Body of pancreas (tissue), 4 donors: ENCODE measurements at regions of chr14 and their contacts with region 1.

Region 1: DNA sequence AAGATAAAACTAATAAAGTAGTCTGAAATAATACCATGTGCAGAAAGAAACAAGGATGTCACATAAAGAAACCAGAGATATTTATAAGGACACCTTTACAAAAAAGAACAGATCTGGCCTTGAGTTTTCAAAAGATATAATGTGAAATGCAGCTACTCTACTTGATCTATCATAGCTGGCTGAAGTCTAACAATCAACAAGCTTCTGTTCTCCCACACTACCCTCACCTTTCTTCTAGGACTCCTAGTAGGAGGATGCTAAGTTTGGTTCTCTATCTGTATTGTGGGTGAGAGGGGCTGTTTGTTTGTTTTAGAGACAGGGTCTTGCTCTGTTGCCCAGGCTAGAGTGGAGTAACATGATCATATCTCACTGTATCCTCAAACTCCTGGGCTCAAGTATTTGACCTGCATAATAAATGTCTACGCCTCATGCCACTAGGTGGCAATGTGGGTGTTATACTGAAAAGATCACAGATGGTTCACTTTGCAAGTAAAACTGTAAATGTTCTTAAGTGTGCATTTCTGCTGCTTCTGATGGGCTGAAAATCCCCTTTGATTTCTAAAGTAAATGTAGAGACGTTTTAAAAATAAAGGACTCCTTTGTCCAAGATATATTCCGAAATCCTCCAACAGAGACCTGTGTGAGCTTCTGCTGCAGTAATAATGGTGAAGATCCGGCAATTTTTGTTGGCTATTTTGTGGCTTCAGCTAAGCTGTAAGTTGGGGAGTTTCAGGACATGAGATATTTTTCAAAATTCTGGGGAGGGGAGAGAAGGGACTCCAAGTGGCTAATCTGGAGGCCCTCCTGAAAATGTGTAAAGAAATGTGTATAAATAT is 269.3 kb downstream of the DAD1 start:
- DNase-seq: peak; percentile 55 to 72 (median 68)
- ATAC-seq: peak; percentile 75
- H3K4me3 ChIP-seq: no peak overlapping the region
- H3K27ac ChIP-seq: no peak overlapping the region
- H3K4me1 ChIP-seq: no peaks in the 10 kb centered on the region
- H3K27me3 ChIP-seq: no peaks in the 10 kb centered on the region
- CTCF ChIP-seq: peak; percentile 41 to 79 (median 60)
- POLR2A ChIP-seq: no peak

Region 2: GRCh38 chr14:22370084-22370847 is 50.5 kb after region 1 on chr14:
- intact Hi-C with region 1: loop called (anchors 5 kb)
- DNase-seq: peak in 3 of 4 donors; percentile 19 to 66 (median 52)
- ATAC-seq: peak; percentile 87
- H3K4me3 ChIP-seq: no peak overlapping the region
- H3K27ac ChIP-seq: peak overlapping the region in 2 of 4 donors; percentile 4 to 44
- H3K4me1 ChIP-seq: no peaks in the 10 kb centered on the region
- H3K27me3 ChIP-seq: no peaks in the 10 kb centered on the region
- CTCF ChIP-seq: no peak
- POLR2A ChIP-seq: no peak

Region 3: GRCh38 chr14:22386924-22387775 is 67.4 kb after region 1 on chr14:
- intact Hi-C with region 1: loop called (anchors 5 kb)
- DNase-seq: peak; percentile 69 to 76 (median 74)
- ATAC-seq: peak; percentile 45
- H3K4me3 ChIP-seq: no peak overlapping the region
- H3K27ac ChIP-seq: no peak overlapping the region
- H3K4me1 ChIP-seq: peaks cover 2% of the 10 kb centered on the region
- H3K27me3 ChIP-seq: no peaks in the 10 kb centered on the region
- CTCF ChIP-seq: peak; percentile 64 to 85 (median 80)
- POLR2A ChIP-seq: no peak

Region 4: DNA sequence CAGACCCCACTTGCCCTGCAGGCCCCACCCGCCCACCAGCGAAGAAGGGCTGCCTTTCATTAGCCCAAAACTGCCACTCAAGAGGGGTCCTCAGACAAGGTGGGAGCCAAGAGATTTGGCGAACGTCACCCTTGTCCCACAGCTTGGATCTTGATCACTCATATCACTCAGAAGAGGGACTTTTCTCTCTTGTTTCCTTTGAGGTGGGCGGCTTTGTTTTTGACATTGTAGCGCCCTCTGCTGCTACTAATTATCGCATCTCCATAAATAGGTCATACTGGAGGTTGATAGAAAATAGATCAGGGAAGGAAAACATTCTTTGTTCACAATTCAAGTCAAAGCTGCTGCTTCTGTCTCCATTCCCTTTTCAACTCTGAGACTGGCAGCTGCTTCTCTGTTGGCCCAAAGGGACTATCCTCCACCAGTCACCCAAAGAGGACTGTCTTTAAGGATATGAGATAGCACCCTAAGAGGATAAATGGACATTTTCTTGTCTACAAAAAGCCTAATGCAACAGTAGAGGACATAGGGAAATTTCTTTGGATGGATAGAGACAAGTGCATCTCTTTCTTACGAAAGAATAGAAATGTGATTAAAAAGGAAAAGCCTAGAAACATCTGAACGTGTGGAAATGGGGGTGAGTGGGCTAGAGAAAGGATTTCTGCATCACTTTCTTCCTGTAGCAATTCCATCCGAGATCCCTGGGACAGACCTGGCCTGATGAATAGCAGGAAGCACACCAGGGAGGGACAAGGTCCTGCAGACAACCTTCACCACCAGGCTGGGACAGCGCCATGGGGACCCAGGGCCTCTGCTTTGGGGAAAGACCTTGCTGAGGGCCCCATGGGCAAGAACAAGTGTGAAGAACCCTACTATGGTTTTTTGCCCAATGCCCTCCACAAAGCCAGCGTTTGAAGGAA is 153.5 kb after region 1 on chr14:
- intact Hi-C with region 1: loop called (anchors 10 kb)
- DNase-seq: peak; percentile 54 to 65 (median 60)
- ATAC-seq: peak; percentile 62
- H3K4me3 ChIP-seq: no peak overlapping the region
- H3K27ac ChIP-seq: no peak overlapping the region
- H3K4me1 ChIP-seq: no peaks in the 10 kb centered on the region
- H3K27me3 ChIP-seq: no peaks in the 10 kb centered on the region
- CTCF ChIP-seq: peak; percentile 21 to 85 (median 75)
- POLR2A ChIP-seq: no peak